ENCODE measurements at regions of chr17 and their contacts with region 1.

Region 1: DNA sequence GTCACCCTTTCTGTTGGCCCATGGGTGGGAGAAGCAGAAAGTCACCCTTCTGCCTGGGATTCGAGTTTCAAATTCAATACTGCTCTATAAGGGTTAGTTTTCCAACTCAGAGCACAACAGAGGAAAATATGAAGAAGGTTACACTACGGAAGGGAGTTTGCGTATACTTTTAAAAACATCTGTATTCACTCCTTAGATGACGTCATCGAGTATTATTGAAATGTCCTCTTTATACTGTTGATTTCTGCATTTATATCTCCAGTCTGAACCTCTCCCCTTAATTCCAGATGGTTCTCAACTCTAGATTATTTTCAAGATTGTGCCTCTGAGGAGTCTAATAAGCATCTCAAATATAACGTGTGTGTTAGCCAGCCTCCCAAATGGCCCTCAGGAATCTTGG is 249.1 kb downstream of the MAP2K4 start:
- DNase-seq: no peak
- H3K4me3 ChIP-seq: no peak overlapping the region
- H3K27ac ChIP-seq: no peak overlapping the region
- H3K4me1 ChIP-seq: no peaks in the 10 kb centered on the region
- H3K27me3 ChIP-seq: no peaks in the 10 kb centered on the region
- CTCF ChIP-seq: no peak
- EP300 ChIP-seq: no peak
- POLR2A ChIP-seq: no peak

Region 2: GRCh38 chr17:12301551-12301950 is 31.8 kb after region 1 on chr17:
- intact Hi-C with region 1: loop called (anchors 5 kb)
- DNase-seq: no peak
- H3K4me3 ChIP-seq: no peak overlapping the region
- H3K27ac ChIP-seq: no peak overlapping the region
- H3K4me1 ChIP-seq: peaks cover 0 to 18% (median 12%) of the 10 kb centered on the region in 4 donors
- H3K27me3 ChIP-seq: no peaks in the 10 kb centered on the region
- CTCF ChIP-seq: no peak
- EP300 ChIP-seq: no peak
- POLR2A ChIP-seq: no peak

Region 3: GRCh38 chr17:12330456-12330855 is 60.7 kb after region 1 on chr17:
- intact Hi-C with region 1: loop called (anchors 10 kb)
- DNase-seq: no peak
- H3K4me3 ChIP-seq: no peak overlapping the region
- H3K27ac ChIP-seq: no peak overlapping the region
- H3K4me1 ChIP-seq: no peaks in the 10 kb centered on the region
- H3K27me3 ChIP-seq: no peaks in the 10 kb centered on the region
- CTCF ChIP-seq: no peak
- EP300 ChIP-seq: no peak
- POLR2A ChIP-seq: no peak

Region 4: DNA sequence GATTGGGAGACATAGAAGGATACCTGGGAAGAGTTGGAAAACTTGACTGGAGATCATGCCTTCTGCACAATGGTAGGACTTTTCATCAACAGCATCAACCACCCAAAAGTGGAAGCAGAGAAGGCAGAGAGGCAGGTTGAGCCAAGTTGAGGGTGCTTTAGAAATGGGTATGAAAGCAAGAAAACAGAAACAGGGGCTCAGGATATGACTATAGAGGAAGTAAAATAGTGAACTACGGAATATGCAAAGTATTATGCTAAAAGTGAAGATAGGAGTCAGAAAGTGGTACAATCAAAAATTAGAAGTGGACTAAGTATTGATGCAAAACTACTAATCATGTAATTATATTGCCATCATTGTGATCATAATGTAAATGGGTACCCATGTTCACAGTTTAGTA is 503.4 kb after region 1 on chr17:
- intact Hi-C with region 1: loop called (anchors 10 kb)
- DNase-seq: no peak
- H3K4me3 ChIP-seq: no peak overlapping the region
- H3K27ac ChIP-seq: no peak overlapping the region
- H3K4me1 ChIP-seq: no peaks in the 10 kb centered on the region
- H3K27me3 ChIP-seq: no peaks in the 10 kb centered on the region
- CTCF ChIP-seq: no peak
- EP300 ChIP-seq: no peak
- POLR2A ChIP-seq: no peak

Region 5: GRCh38 chr17:13256537-13256936 is 986.8 kb after region 1 on chr17:
- intact Hi-C with region 1: no loop called
- DNase-seq: no peak
- H3K4me3 ChIP-seq: no peak overlapping the region
- H3K27ac ChIP-seq: no peak overlapping the region
- H3K4me1 ChIP-seq: no peaks in the 10 kb centered on the region
- H3K27me3 ChIP-seq: no peaks in the 10 kb centered on the region
- CTCF ChIP-seq: no peak
- EP300 ChIP-seq: no peak
- POLR2A ChIP-seq: no peak